ENCODE measurements at regions of chr20 and their contacts with region 1.

Region 1: DNA sequence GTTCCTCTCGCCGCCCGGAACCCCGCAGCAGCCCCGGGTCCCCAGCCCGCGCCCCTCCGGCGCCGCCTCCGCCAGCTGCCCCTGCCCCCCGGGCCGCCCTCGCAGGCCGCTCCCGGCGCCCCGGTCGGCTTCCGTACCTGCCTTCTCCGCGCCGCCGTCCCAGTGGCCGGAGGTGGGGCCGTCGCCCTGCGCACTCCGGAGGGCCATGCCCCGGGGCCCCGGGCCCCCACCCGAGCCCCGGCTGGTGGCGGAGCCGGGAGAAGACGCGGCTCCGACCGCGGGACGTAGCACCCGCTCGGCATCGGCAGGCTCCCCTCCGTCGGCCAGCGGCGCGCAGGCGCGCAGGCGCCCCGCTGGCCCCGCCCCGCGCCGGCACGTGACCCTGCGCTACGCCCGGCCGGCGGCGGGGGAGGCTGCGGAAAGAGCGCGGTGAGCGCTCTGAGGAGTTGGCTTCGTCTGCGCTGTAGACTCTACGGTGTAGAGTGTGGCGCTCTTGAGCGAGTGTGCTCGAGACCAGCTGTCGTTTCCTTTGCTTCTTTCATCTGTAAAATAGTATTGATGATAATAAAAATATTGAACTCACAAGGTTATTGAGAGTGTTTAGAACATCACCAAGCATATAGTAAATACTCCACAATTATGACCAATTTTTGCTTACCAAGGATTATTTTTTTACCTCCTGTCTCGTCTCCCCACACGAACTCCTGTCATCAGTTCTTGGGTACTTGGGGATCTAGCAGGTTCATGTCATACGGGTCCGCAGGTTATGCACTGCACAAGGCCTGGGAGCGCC is at the start of gene TBC1D20:
- DNase-seq: peak; percentile 95
- ATAC-seq: peak; percentile 97
- H3K4me3 Mint-ChIP-seq: peak within 1 kb of the TSS; percentile 94
- H3K27ac Mint-ChIP-seq: peak within 1 kb of the TSS; percentile 94
- H3K4me1 Mint-ChIP-seq: peaks cover 34% of the 10 kb centered on the region
- H3K27me3 Mint-ChIP-seq: peaks cover 3% of the 10 kb centered on the region
- total RNA-seq, gene TBC1D20: 36.8 to 38.0 TPM

Region 2: GRCh38 chr20:208942-209566 is 253.3 kb before region 1 on chr20:
- POLR2A ChIA-PET with region 1: no interaction called
- DNase-seq: no peak
- ATAC-seq: peak; percentile 82
- H3K4me3 Mint-ChIP-seq: no peak overlapping the region
- H3K27ac Mint-ChIP-seq: no peak overlapping the region
- H3K4me1 Mint-ChIP-seq: no peaks in the 10 kb centered on the region
- H3K27me3 Mint-ChIP-seq: peaks cover 7% of the 10 kb centered on the region

Region 3: GRCh38 chr20:438571-439469 is 23.6 kb before region 1 on chr20:
- POLR2A ChIA-PET with region 1: interaction called, 27 read pairs
- DNase-seq: peak; percentile 65
- ATAC-seq: peak; percentile 79
- H3K4me3 Mint-ChIP-seq: peak overlapping the region; percentile 78
- H3K27ac Mint-ChIP-seq: peak overlapping the region; percentile 86
- H3K4me1 Mint-ChIP-seq: peaks cover 44% of the 10 kb centered on the region
- H3K27me3 Mint-ChIP-seq: no peaks in the 10 kb centered on the region

Region 4: GRCh38 chr20:496126-496696 is 33.8 kb after region 1 on chr20:
- POLR2A ChIA-PET with region 1: no interaction called
- DNase-seq: no peak
- ATAC-seq: no peak
- H3K4me3 Mint-ChIP-seq: no peak overlapping the region
- H3K27ac Mint-ChIP-seq: no peak overlapping the region
- H3K4me1 Mint-ChIP-seq: no peaks in the 10 kb centered on the region
- H3K27me3 Mint-ChIP-seq: no peaks in the 10 kb centered on the region

Region 5: DNA sequence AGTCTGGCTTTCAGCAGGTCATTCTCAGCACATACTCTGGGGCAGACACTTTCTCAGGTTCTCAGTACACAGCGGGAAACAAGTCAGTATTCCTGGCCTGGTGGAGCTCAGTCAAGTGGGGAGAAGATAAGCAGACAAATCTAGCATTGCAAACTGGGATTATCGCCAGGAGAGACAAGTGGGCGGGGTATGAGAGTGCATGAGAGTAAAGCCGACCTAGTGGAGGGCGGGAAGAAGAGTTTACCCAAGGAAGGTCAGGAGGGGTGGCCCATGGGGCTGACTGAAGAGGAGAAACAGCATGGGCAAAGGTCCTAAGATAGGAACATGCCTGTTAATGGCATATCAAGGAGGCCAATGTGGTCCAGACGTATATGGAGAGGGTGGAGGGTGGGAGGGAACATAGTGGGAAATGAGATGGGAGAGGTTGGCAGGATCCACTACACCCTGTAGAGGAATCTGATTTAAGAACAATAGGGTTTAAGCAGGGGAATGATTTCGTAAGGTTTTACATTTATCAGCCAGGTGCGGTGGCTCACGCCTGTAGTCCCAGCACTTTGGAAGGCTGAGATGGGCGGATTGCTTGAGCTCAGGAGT is 93.6 kb after region 1 on chr20:
- POLR2A ChIA-PET with region 1: no interaction called
- DNase-seq: no peak
- ATAC-seq: no peak
- H3K4me3 Mint-ChIP-seq: no peak overlapping the region
- H3K27ac Mint-ChIP-seq: no peak overlapping the region
- H3K4me1 Mint-ChIP-seq: no peaks in the 10 kb centered on the region
- H3K27me3 Mint-ChIP-seq: peaks cover 42% of the 10 kb centered on the region

Measured in activated naive CD8-positive, alpha-beta T cell treated with anti-CD3 and anti-CD28 coated beads, Interleukin-2, amount 10 ng/mL, durations not matched to agents 7 days and 5 days (primary cell).